CD14-positive monocyte (primary cell): ENCODE measurements at regions of chr20 and their contacts with region 1.

Region 1: DNA sequence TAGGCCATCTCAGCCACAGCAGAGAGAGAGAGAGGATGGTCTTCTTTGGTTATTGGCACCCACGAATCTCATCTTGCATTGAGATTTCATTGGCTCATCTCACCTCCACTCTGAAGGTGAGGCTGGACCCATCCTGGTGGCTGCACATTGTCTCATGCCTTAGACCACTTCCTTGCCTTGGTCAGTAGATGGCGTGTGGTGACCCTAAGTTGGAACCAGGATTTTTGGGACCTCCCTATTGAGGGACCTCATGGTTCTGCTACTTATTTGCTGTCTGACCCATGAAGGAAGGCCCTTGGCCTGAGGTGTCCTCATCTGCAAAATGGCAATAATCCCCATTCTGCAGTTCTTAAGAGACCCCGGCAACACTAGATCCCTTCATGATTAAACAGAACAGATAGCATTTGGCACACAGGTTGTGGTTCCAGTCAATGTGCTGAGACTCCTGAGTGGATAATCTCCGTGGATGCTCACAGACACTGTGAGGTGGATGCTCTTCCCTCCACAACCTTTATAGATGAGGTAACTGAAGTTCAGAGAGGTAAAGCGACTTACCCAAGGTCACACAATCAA is 21.5 kb upstream of the AAR2 start:
- DNase-seq: peak in 1 of 3 donors; percentile 19
- H3K4me3 ChIP-seq: no peak overlapping the region
- H3K4me3 Mint-ChIP-seq: no peak overlapping the region
- H3K27ac ChIP-seq: no peak overlapping the region
- H3K27ac Mint-ChIP-seq: no peak overlapping the region
- H3K4me1 ChIP-seq: no peaks in the 10 kb centered on the region
- H3K4me1 Mint-ChIP-seq: peaks cover 2% of the 10 kb centered on the region
- H3K27me3 ChIP-seq: no peaks in the 10 kb centered on the region
- H3K27me3 Mint-ChIP-seq: peaks cover 2 to 3% (median 3%) of the 10 kb centered on the region in 3 donors
- CTCF ChIP-seq: peak; percentile 41

Region 2: GRCh38 chr20:36273414-36274180 is 58.8 kb after region 1 on chr20:
- intact Hi-C with region 1: no loop called
- DNase-seq: no peak
- H3K4me3 ChIP-seq: no peak overlapping the region
- H3K4me3 Mint-ChIP-seq: no peak overlapping the region
- H3K27ac ChIP-seq: no peak overlapping the region
- H3K27ac Mint-ChIP-seq: peak overlapping the region in 1 of 7 donors; percentile 66
- H3K4me1 ChIP-seq: no peaks in the 10 kb centered on the region
- H3K4me1 Mint-ChIP-seq: no peaks in the 10 kb centered on the region
- H3K27me3 ChIP-seq: no peaks in the 10 kb centered on the region
- H3K27me3 Mint-ChIP-seq: peaks cover 3 to 15% (median 15%) of the 10 kb centered on the region in 3 donors
- CTCF ChIP-seq: no peak

Region 3: DNA sequence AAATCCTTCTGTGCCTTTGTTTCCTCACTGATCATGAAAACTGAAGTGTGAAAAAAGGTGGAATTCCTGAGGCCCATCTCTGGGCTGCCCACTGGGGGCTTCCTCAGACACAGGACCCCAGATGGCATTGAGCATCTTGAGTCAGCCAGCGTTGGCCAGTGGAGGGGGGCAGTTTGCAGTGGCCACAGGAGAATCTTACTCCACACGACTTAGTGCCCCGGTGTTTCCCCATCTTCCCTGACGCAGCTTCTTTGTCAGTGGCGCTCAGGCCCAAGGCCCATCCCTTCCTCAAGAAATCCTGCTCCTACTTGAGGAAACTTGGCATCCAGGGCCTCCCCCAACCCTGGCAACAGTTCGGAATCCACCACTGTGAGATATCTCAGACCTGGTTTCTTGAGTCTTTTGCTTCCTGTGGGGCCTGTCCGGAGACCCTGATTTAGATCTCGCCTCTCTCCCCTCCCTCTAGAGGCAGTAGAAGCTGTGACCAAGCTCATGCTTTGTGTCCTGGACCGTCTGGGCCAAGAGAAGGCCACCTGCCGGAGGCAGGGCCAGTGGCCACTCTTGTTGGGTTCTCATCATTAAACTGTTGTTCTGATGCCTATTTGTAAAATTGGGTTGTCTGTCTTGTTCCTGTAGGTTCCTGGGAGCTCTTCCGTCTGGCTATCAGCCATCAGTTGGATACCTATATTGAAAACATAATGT is 71.1 kb after region 1 on chr20:
- intact Hi-C with region 1: no loop called
- DNase-seq: no peak
- H3K4me3 ChIP-seq: no peak overlapping the region
- H3K4me3 Mint-ChIP-seq: no peak overlapping the region
- H3K27ac ChIP-seq: no peak overlapping the region
- H3K27ac Mint-ChIP-seq: no peak overlapping the region
- H3K4me1 ChIP-seq: no peaks in the 10 kb centered on the region
- H3K4me1 Mint-ChIP-seq: no peaks in the 10 kb centered on the region
- H3K27me3 ChIP-seq: peaks cover 0 to 2% of the 10 kb centered on the region in 2 donors
- H3K27me3 Mint-ChIP-seq: peaks cover 8 to 29% (median 14%) of the 10 kb centered on the region in 3 donors
- CTCF ChIP-seq: no peak

Region 4: GRCh38 chr20:36439040-36439730 is 224.4 kb after region 1 on chr20:
- intact Hi-C with region 1: loop called in 1 of 2 experiments (anchors 5 kb)
- DNase-seq: peak; percentile 32 to 52 (median 48)
- H3K4me3 ChIP-seq: no peak overlapping the region
- H3K4me3 Mint-ChIP-seq: no peak overlapping the region
- H3K27ac ChIP-seq: no peak overlapping the region
- H3K27ac Mint-ChIP-seq: no peak overlapping the region
- H3K4me1 ChIP-seq: peaks cover 0 to 16% of the 10 kb centered on the region in 2 donors
- H3K4me1 Mint-ChIP-seq: peaks cover 10% of the 10 kb centered on the region
- H3K27me3 ChIP-seq: peaks cover 0 to 4% of the 10 kb centered on the region in 2 donors
- H3K27me3 Mint-ChIP-seq: peaks cover 12 to 18% (median 14%) of the 10 kb centered on the region in 3 donors
- CTCF ChIP-seq: peak; percentile 91